ENCODE measurements at regions of chr20 and their contacts with region 1.

Region 1: GRCh38 chr20:56468316-56469082 is at the start of gene RTF2:
- DNase-seq: peak; percentile 99
- ATAC-seq: peak; percentile 93
- H3K4me3 Mint-ChIP-seq: peak within 1 kb of the TSS; percentile 100
- H3K27ac Mint-ChIP-seq: peak within 1 kb of the TSS; percentile 99
- H3K4me1 Mint-ChIP-seq: peaks cover 44% of the 10 kb centered on the region
- H3K27me3 Mint-ChIP-seq: no peaks in the 10 kb centered on the region
- CTCF ChIP-seq: no peak
- total RNA-seq, gene RTF2: 81.0 and 81.1 TPM in 2 replicates

Region 2: GRCh38 chr20:56229812-56230211 is 238.7 kb before region 1 on chr20:
- CTCF ChIA-PET with region 1: no interaction called
- POLR2A ChIA-PET with region 1: no interaction called
- intact Hi-C with region 1: no loop called
- DNase-seq: no peak
- ATAC-seq: no peak
- H3K4me3 Mint-ChIP-seq: no peak overlapping the region
- H3K27ac Mint-ChIP-seq: no peak overlapping the region
- H3K4me1 Mint-ChIP-seq: no peaks in the 10 kb centered on the region
- H3K27me3 Mint-ChIP-seq: no peaks in the 10 kb centered on the region
- CTCF ChIP-seq: no peak

Region 3: GRCh38 chr20:56358596-56359211 is 109.8 kb before region 1 on chr20 and contains the start of gene FAM210B:
- CTCF ChIA-PET with region 1: no interaction called
- POLR2A ChIA-PET with region 1: no interaction called
- intact Hi-C with region 1: loop called (anchors 2 kb)
- DNase-seq: peak; percentile 73
- ATAC-seq: peak; percentile 100
- H3K4me3 Mint-ChIP-seq: peak within 1 kb of the TSS; percentile 84
- H3K27ac Mint-ChIP-seq: no peak within 1 kb of the TSS
- H3K4me1 Mint-ChIP-seq: peaks cover 16% of the 10 kb centered on the region
- H3K27me3 Mint-ChIP-seq: no peaks in the 10 kb centered on the region
- CTCF ChIP-seq: no peak
- total RNA-seq, gene FAM210B: 5.2 and 5.3 TPM in 2 replicates

Region 4: DNA sequence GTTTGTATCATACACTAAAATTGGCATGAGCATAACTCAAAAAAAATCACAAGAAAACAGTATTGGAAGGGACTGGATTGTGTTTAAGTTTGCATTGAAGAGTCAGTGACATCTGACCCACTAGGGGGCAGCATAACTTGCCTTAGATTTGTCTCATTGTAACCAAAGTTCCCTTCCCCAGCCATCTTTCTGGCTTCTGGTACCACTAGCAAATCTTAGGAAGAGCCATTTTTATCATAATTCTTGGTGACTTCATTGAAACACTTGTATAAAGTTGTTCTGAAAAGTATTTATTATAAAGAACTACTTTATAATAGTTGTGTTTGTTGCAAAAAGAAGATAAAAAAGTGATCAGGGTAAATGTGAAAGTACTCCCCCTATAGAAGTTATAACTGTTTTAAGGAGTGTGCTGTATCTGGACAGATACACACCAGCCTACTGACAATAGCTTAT is 68.4 kb before region 1 on chr20:
- CTCF ChIA-PET with region 1: no interaction called
- POLR2A ChIA-PET with region 1: no interaction called
- intact Hi-C with region 1: loop called (anchors 1 kb)
- DNase-seq: no peak
- ATAC-seq: peak; percentile 65
- H3K4me3 Mint-ChIP-seq: no peak overlapping the region
- H3K27ac Mint-ChIP-seq: no peak overlapping the region
- H3K4me1 Mint-ChIP-seq: peaks cover 15% of the 10 kb centered on the region
- H3K27me3 Mint-ChIP-seq: no peaks in the 10 kb centered on the region
- CTCF ChIP-seq: peak; percentile 47

Region 5: DNA sequence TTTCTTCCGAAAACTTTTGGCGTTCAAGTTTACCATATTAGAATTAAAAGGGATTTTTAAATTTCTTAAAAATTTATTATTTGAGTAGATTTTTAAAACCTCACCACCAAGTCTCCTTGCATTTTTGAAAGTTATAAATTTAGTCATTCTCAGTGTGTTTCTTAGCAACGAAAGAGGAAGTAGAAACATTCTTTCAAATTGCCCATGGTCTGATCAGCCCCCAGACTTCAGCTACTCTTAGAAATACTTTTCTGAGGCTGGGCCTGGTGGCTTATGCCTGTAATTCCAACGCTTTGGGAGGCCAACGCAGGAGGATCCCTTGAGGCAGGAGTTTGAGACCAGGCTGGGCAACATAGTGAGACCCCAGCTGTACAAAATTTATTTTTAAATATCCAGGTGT is 15.1 kb before region 1 on chr20:
- CTCF ChIA-PET with region 1: no interaction called
- POLR2A ChIA-PET with region 1: interaction called, 3 read pairs
- intact Hi-C with region 1: loop called (anchors 1 kb)
- DNase-seq: no peak
- ATAC-seq: peak; percentile 75
- H3K4me3 Mint-ChIP-seq: peak overlapping the region; percentile 15
- H3K27ac Mint-ChIP-seq: peak overlapping the region; percentile 84
- H3K4me1 Mint-ChIP-seq: peaks cover 14% of the 10 kb centered on the region
- H3K27me3 Mint-ChIP-seq: no peaks in the 10 kb centered on the region
- CTCF ChIP-seq: no peak

Region 6: DNA sequence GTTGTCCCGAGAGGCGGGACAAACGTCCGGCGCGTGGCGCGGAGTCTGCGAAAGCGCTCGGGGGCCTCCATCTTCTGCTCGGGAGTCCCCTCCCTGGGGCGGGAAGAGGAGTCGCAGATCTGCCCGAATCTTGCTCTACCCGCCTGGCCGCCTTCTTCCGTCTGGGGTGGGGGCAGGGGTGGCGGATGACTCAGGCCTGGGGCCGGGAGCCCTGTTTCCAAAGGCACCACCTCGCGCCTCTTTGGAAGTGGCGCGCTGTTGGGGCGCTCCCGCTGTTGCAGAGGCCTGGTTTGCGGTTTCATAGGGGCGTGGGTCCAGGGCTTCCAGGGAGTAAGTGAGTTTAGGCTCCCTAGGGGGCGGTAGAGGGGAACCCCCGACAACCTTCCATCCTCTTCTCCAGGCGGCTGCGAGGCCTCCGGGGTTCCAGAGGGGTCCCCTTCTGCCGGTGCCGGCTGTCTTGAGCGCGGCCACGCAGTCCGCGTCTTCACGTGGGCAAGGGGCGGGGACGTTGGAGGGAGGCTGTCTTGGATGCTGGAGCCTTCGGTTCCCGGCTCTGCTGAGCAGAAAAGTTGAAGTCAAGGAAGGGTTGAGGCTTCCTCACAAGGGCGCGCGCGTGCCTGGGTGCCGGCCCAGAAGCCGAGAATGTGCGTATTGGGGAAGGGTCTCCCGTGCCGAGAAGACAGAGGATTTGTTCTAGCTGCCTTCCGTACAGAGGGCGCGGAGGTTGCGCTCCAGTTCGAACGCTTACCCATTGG is 158.0 kb after region 1 on chr20:
- CTCF ChIA-PET with region 1: no interaction called
- POLR2A ChIA-PET with region 1: no interaction called
- intact Hi-C with region 1: no loop called
- DNase-seq: no peak
- ATAC-seq: no peak
- H3K4me3 Mint-ChIP-seq: no peak overlapping the region
- H3K27ac Mint-ChIP-seq: no peak overlapping the region
- H3K4me1 Mint-ChIP-seq: peaks cover 15% of the 10 kb centered on the region
- H3K27me3 Mint-ChIP-seq: peaks cover 44% of the 10 kb centered on the region
- CTCF ChIP-seq: no peak

Region 7: GRCh38 chr20:58458180-58459057 is 1989.9 kb after region 1 on chr20:
- CTCF ChIA-PET with region 1: no interaction called
- POLR2A ChIA-PET with region 1: no interaction called
- intact Hi-C with region 1: loop called (anchors 10 kb)
- DNase-seq: peak; percentile 58
- ATAC-seq: peak; percentile 99
- H3K4me3 Mint-ChIP-seq: peak overlapping the region; percentile 53
- H3K27ac Mint-ChIP-seq: peak overlapping the region; percentile 74
- H3K4me1 Mint-ChIP-seq: peaks cover 30% of the 10 kb centered on the region
- H3K27me3 Mint-ChIP-seq: no peaks in the 10 kb centered on the region
- CTCF ChIP-seq: no peak